Naive thymus-derived CD8-positive, alpha-beta T cell (primary cell): ENCODE measurements at regions of chr4 and their contacts with region 1.

Region 1: DNA sequence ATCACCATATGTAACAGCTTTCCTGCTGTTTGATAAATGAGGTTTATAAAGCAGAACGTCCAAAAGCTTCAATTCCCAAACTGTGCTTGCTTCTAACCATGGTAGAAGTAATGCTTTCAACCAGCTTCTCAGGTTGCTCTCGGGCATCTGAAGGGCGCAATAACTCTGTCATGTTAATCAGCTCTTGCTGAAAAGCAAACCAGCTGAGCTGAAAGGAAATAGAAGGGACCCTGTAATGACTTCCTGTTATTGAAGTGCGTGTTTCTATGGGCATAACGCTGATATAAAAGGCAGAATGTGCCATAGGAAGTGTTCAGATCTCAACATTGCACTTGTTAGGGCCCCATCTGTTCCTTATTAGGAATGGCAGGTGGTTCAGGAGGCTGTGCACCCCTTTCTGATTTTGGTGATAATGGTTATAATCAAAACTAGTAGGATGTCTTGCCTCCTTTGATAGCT is 21.2 kb downstream of the HERC3 start:
- DNase-seq: peak; percentile 11 to 87 (median 67)
- ATAC-seq: peak; percentile 94 to 95
- H3K4me3 Mint-ChIP-seq: peak overlapping the region; percentile 66 to 90 (median 84)
- H3K27ac Mint-ChIP-seq: peak overlapping the region; percentile 95 to 100 (median 98)
- H3K4me1 Mint-ChIP-seq: peaks cover 50 to 90% (median 89%) of the 10 kb centered on the region in 4 donors
- H3K27me3 Mint-ChIP-seq: no peaks in the 10 kb centered on the region

Region 2: GRCh38 chr4:88591787-88592599 is 21.5 kb before region 1 on chr4 and contains the start of gene HERC3:
- POLR2A ChIA-PET with region 1: interaction called, 119 read pairs
- DNase-seq: peak; percentile 85 to 93 (median 89)
- ATAC-seq: peak; percentile 89
- H3K4me3 Mint-ChIP-seq: peak within 1 kb of the TSS; percentile 91 to 100 (median 98)
- H3K27ac Mint-ChIP-seq: peak within 1 kb of the TSS; percentile 90 to 99 (median 97)
- H3K4me1 Mint-ChIP-seq: peaks cover 18 to 50% (median 42%) of the 10 kb centered on the region in 4 donors
- H3K27me3 Mint-ChIP-seq: no peaks in the 10 kb centered on the region
- polyA plus RNA-seq, gene HERC3: 29.7 to 37.1 (median 33.6) TPM

Region 3: DNA sequence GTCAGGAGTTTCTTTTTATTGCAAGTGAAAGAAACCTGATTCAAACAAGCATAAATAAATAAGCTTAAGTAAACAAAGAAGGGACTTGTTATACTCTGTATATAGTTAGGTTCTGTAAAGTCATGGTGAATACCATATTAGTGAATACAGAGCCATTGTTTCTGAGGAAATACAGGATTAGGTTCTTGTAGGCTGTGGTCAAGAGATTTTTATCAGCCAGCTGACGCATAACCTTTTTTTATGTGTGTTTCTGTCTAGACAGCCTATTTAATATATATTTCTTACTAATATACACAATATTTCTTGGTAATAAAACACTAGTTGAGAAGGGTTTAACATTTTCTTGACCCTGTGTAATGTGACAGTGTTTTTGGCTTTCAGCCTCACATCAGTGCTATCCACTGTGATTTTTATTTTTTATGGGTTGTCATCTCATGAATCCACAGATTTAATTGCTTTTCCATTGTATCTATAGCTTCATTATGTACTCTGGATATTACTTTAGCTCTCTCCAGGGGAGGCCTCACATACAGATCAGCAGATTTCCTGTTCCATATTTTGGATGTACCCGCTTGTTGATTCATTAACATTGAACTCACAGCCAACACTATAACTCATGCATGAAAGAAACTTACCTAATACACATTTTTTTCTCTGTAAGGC is 13.1 kb before region 1 on chr4:
- POLR2A ChIA-PET with region 1: interaction called, 11 read pairs
- DNase-seq: no peak
- ATAC-seq: no peak
- H3K4me3 Mint-ChIP-seq: peak overlapping the region in 1 of 10 donors; percentile 44
- H3K27ac Mint-ChIP-seq: peak overlapping the region in 4 of 10 donors; percentile 12 to 75 (median 48)
- H3K4me1 Mint-ChIP-seq: peaks cover 35 to 76% (median 70%) of the 10 kb centered on the region in 4 donors
- H3K27me3 Mint-ChIP-seq: no peaks in the 10 kb centered on the region

Region 4: DNA sequence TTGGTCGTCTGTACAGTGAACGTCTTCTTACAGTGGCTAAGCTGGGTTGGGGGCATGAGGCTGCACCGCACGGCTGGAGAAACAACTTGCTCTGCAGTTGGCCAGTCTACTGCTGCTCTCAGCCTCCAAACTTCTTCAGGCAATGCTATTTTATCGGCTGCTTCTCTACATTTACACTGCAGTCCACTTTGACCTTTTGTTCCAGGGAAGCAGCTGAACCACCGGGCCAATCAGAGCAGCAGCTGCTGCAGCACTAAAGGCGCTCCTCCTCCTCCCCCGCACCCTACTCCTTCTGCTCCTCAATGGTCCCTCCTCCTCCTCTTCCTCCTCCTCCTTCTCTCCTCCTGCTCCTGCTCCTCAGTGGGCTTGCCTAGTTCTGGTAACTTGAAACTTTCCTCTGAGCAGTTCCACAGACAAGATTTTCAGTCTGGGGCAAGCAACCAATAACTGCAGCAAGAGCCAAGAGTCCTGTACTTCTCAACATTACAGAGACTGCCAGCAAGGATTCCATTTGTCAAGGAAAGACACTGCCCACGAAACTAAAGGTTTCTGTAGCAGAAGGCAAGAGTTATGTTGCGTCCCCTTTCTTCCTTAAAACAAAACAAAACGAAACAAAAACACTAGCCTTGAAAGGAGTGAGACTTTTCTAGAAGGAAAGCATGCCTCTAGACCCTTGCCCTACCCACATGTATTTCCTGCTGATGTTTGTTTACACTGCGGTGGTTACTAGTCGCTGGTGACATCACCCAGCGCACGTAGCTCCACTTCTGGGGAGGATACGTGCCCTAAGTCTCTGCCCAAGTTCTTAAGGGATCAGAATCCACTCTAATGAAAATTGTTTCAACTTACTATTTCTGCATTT is 209.8 kb after region 1 on chr4:
- POLR2A ChIA-PET with region 1: no interaction called
- DNase-seq: peak; percentile 23 to 83 (median 66)
- ATAC-seq: peak; percentile 92 to 95
- H3K4me3 Mint-ChIP-seq: peak overlapping the region; percentile 81 to 96 (median 91)
- H3K27ac Mint-ChIP-seq: peak overlapping the region; percentile 87 to 97 (median 94)
- H3K4me1 Mint-ChIP-seq: peaks cover 6 to 35% (median 20%) of the 10 kb centered on the region in 4 donors
- H3K27me3 Mint-ChIP-seq: no peaks in the 10 kb centered on the region